ENCODE measurements at regions of chr5 and their contacts with region 1.

Region 1: GRCh38 chr5:140632150-140633020 is 590 bp downstream of the CD14 start:
- DNase-seq: peak in 2 of 3 donors; percentile 59 to 71
- H3K4me3 ChIP-seq: peak overlapping the region; percentile 27 to 74 (median 50)
- H3K27ac ChIP-seq: no peak overlapping the region
- H3K4me1 ChIP-seq: peaks cover 0 to 22% (median 17%) of the 10 kb centered on the region in 4 experiments
- H3K27me3 ChIP-seq: peaks cover 0 to 46% (median 26%) of the 10 kb centered on the region in 5 experiments

Region 2: GRCh38 chr5:140372971-140373487 is 259.4 kb before region 1 on chr5:
- CTCF ChIA-PET with region 1: interaction called, 10 read pairs
- POLR2A ChIA-PET with region 1: interaction called, 4 read pairs
- DNase-seq: peak; percentile 27 to 46 (median 30)
- H3K4me3 ChIP-seq: no peak overlapping the region
- H3K27ac ChIP-seq: no peak overlapping the region
- H3K4me1 ChIP-seq: peaks cover 0 to 4% (median 1%) of the 10 kb centered on the region in 4 experiments
- H3K27me3 ChIP-seq: no peaks in the 10 kb centered on the region

Region 3: DNA sequence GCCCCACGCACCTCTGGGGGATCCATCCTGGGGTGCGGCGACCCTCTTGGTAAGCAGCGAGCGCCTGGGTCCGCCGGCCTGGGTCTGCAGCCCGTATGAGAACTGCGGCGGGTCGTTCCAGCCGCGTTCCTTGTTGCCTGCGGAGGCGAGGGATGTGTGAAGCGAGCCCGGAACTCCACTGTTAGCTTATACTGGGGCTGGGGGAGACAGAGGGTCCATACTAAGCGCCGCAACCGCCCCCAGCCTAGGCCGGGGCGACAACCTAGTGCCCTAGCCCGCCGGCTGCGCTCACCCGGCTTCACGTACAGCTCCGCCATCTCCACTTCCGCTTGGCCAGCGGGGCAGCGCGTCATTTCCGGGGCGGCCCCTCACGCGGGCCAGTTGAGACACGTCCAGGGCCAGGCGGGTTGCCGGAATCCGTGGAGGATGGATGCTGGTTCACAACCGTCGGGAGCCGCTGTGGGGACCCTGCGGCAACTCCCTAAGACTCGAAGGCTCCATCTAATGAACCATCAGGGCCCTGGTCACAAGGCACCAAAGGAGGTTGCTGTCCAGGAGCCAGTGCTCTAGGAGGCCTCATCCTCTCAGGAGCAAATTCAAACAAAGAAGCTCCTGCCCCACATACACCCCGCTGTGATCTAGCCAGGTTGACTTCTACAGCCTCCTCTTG is 75.1 kb before region 1 on chr5 and contains the start of gene SRA1:
- CTCF ChIA-PET with region 1: interaction called, 19 read pairs
- POLR2A ChIA-PET with region 1: no interaction called
- DNase-seq: peak; percentile 81 to 87 (median 81)
- H3K4me3 ChIP-seq: peak within 1 kb of the TSS; percentile 67 to 93 (median 81)
- H3K27ac ChIP-seq: peak within 1 kb of the TSS; percentile 74 to 91
- H3K4me1 ChIP-seq: peaks cover 12 to 19% (median 18%) of the 10 kb centered on the region in 4 experiments
- H3K27me3 ChIP-seq: no peaks in the 10 kb centered on the region

Measured in common myeloid progenitor, CD34-positive (primary cell).